ENCODE measurements at regions of chr16 and their contacts with region 1.

Region 1: GRCh38 chr16:78099372-78100161 is at the start of gene WWOX:
- DNase-seq: peak; percentile 94 to 98 (median 96)
- H3K4me3 ChIP-seq: peak within 1 kb of the TSS; percentile 98
- H3K4me3 Mint-ChIP-seq: peak within 1 kb of the TSS; percentile 85 to 97 (median 91)
- H3K27ac ChIP-seq: peak within 1 kb of the TSS; percentile 87
- H3K27ac Mint-ChIP-seq: peak within 1 kb of the TSS; percentile 76 to 98 (median 94)
- H3K4me1 ChIP-seq: peaks cover 12% of the 10 kb centered on the region
- H3K4me1 Mint-ChIP-seq: peaks cover 25 to 40% (median 33%) of the 10 kb centered on the region in 3 donors
- H3K27me3 ChIP-seq: no peaks in the 10 kb centered on the region
- H3K27me3 Mint-ChIP-seq: peaks cover 0 to 2% of the 10 kb centered on the region in 2 donors
- total RNA-seq, gene WWOX: 17.2 to 18.6 TPM

Region 2: GRCh38 chr16:78045865-78046581 is 53.5 kb before region 1 on chr16:
- CTCF ChIA-PET with region 1: no interaction called
- POLR2A ChIA-PET with region 1: no interaction called
- DNase-seq: peak in 1 of 5 donors; percentile 4
- H3K4me3 ChIP-seq: no peak overlapping the region
- H3K4me3 Mint-ChIP-seq: no peak overlapping the region
- H3K27ac ChIP-seq: no peak overlapping the region
- H3K27ac Mint-ChIP-seq: no peak overlapping the region
- H3K4me1 ChIP-seq: no peaks in the 10 kb centered on the region
- H3K4me1 Mint-ChIP-seq: no peaks in the 10 kb centered on the region
- H3K27me3 ChIP-seq: no peaks in the 10 kb centered on the region
- H3K27me3 Mint-ChIP-seq: peaks cover 22 to 51% of the 10 kb centered on the region in 2 donors

Region 3: GRCh38 chr16:78065319-78065718 is 34.2 kb before region 1 on chr16:
- CTCF ChIA-PET with region 1: no interaction called
- POLR2A ChIA-PET with region 1: no interaction called
- DNase-seq: no peak
- H3K4me3 ChIP-seq: no peak overlapping the region
- H3K4me3 Mint-ChIP-seq: no peak overlapping the region
- H3K27ac ChIP-seq: no peak overlapping the region
- H3K27ac Mint-ChIP-seq: no peak overlapping the region
- H3K4me1 ChIP-seq: no peaks in the 10 kb centered on the region
- H3K4me1 Mint-ChIP-seq: no peaks in the 10 kb centered on the region
- H3K27me3 ChIP-seq: no peaks in the 10 kb centered on the region
- H3K27me3 Mint-ChIP-seq: peaks cover 15 to 27% of the 10 kb centered on the region in 2 donors

Region 4: GRCh38 chr16:78116946-78117345 is 17.4 kb after region 1 on chr16:
- CTCF ChIA-PET with region 1: interaction called, 12 read pairs
- POLR2A ChIA-PET with region 1: no interaction called
- DNase-seq: no peak
- H3K4me3 ChIP-seq: no peak overlapping the region
- H3K4me3 Mint-ChIP-seq: no peak overlapping the region
- H3K27ac ChIP-seq: no peak overlapping the region
- H3K27ac Mint-ChIP-seq: no peak overlapping the region
- H3K4me1 ChIP-seq: no peaks in the 10 kb centered on the region
- H3K4me1 Mint-ChIP-seq: no peaks in the 10 kb centered on the region
- H3K27me3 ChIP-seq: no peaks in the 10 kb centered on the region
- H3K27me3 Mint-ChIP-seq: no peaks in the 10 kb centered on the region